Heart left ventricle (tissue), 16 donors: ENCODE measurements at regions of chr10 and their contacts with region 1.

Region 1: DNA sequence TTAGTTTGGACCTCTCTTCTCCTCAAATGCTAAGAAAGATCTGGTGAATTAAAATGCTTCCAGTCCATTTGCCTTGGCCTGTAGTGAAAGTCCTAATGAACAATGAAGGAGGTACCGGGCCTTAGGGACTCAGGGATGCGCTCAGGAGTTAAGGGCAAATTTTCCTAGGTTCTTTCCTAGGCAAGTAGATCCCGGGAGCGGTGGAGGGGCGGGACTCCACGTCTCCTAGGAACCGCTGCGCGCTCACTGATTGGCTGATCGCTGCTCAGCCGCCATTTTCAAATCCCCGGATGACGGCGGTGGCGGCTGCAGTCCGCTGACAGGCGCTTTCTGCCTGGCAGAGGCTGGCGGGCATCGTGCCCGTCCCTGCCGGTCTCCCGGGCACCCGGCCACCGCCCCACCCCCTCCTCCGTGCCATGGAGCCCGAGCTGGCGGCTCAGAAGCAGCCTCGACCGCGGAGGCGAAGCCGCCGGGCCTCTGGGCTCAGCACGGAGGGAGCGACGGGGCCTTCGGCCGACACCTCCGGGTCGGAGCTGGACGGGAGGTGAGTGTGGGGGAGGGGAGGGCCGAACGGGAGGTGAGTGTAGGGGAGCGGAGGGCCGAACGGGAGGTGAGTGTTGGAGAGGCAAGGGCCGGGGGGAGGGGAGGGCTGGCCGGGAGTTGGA is at the start of gene NET1:
- DNase-seq: peak; percentile 86 to 91 (median 90)
- ATAC-seq: peak; percentile 97 to 99 (median 99)
- H3K4me3 ChIP-seq: peak within 1 kb of the TSS; percentile 40 to 92 (median 78)
- H3K27ac ChIP-seq: peak within 1 kb of the TSS in 10 of 12 donors; percentile 7 to 84 (median 50)
- H3K4me1 ChIP-seq: peaks cover 0 to 14% (median 0%) of the 10 kb centered on the region in 12 donors
- H3K27me3 ChIP-seq: peaks cover 0 to 8% (median 0%) of the 10 kb centered on the region in 9 donors
- CTCF ChIP-seq: no peak
- POLR2A ChIP-seq: no peak
- total RNA-seq, gene NET1: 12.7 to 29.5 (median 15.8) TPM

Region 2: GRCh38 chr10:4825851-4826665 is 586.4 kb before region 1 on chr10 and contains the start of gene AKR1E2:
- intact Hi-C with region 1: loop called in 1 of 10 experiments (anchors 10 kb)
- DNase-seq: peak; percentile 90 to 96 (median 94)
- ATAC-seq: peak; percentile 82 to 96 (median 94)
- H3K4me3 ChIP-seq: peak within 1 kb of the TSS; percentile 33 to 94 (median 71)
- H3K27ac ChIP-seq: peak within 1 kb of the TSS; percentile 28 to 97 (median 92)
- H3K4me1 ChIP-seq: peaks cover 0 to 14% (median 2%) of the 10 kb centered on the region in 12 donors
- H3K27me3 ChIP-seq: no peaks in the 10 kb centered on the region
- CTCF ChIP-seq: no peak
- POLR2A ChIP-seq: peak in 1 of 2 donors; percentile 48
- total RNA-seq, gene AKR1E2: 1.6 to 8.0 (median 4.1) TPM

Region 3: GRCh38 chr10:6838118-6838517 is 1425.7 kb after region 1 on chr10:
- intact Hi-C with region 1: no loop called
- DNase-seq: no peak
- ATAC-seq: no peak
- H3K4me3 ChIP-seq: no peak overlapping the region
- H3K27ac ChIP-seq: no peak overlapping the region
- H3K4me1 ChIP-seq: no peaks in the 10 kb centered on the region
- H3K27me3 ChIP-seq: no peaks in the 10 kb centered on the region
- CTCF ChIP-seq: peak in 3 of 12 donors; percentile 19 to 28 (median 22)
- POLR2A ChIP-seq: no peak